ENCODE measurements at regions of chr18 and their contacts with region 1.

Region 1: GRCh38 chr18:58195278-58195765 is 151.3 kb downstream of the NEDD4L start:
- DNase-seq: no peak
- ATAC-seq: no peak
- H3K4me3 ChIP-seq: no peak overlapping the region
- H3K27ac ChIP-seq: no peak overlapping the region
- H3K4me1 ChIP-seq: peaks cover 5% of the 10 kb centered on the region in 2 experiments; a peak in 4 of 5 replicates
- H3K27me3 ChIP-seq: no peaks in the 10 kb centered on the region
- CTCF ChIP-seq: no peak
- EP300 ChIP-seq: no peak
- POLR2A ChIP-seq: no peak
- RAD21 ChIP-seq: no peak

Region 2: GRCh38 chr18:58231930-58232329 is 36.6 kb after region 1 on chr18:
- CTCF ChIA-PET with region 1: no interaction called
- POLR2A ChIA-PET with region 1: no interaction called
- in situ Hi-C with region 1: no loop called
- intact Hi-C with region 1: loop called (anchors 2 kb)
- DNase-seq: peak; percentile 24 to 53 (median 40)
- ATAC-seq: peak; percentile 94
- H3K4me3 ChIP-seq: no peak overlapping the region
- H3K27ac ChIP-seq: no peak overlapping the region
- H3K4me1 ChIP-seq: no peaks in the 10 kb centered on the region
- H3K27me3 ChIP-seq: no peaks in the 10 kb centered on the region
- CTCF ChIP-seq: peak; percentile 44 to 66 (median 52)
- EP300 ChIP-seq: no peak
- POLR2A ChIP-seq: no peak
- RAD21 ChIP-seq: peak; percentile 16 to 65

Region 3: GRCh38 chr18:58321986-58322385 is 126.7 kb after region 1 on chr18:
- CTCF ChIA-PET with region 1: interaction called, 10 read pairs
- POLR2A ChIA-PET with region 1: no interaction called
- in situ Hi-C with region 1: loop called (anchors 10 kb)
- intact Hi-C with region 1: loop called (anchors 1 kb)
- DNase-seq: peak; percentile 51 to 83 (median 64)
- ATAC-seq: peak; percentile 100
- H3K4me3 ChIP-seq: no peak overlapping the region
- H3K27ac ChIP-seq: peak overlapping the region; percentile 45; the same call in 1 of the 3 replicates
- H3K4me1 ChIP-seq: no peaks in the 10 kb centered on the region; a peak in 3 of 5 replicates
- H3K27me3 ChIP-seq: no peaks in the 10 kb centered on the region
- CTCF ChIP-seq: peak; percentile 60 to 76 (median 63)
- EP300 ChIP-seq: peak; percentile 17; the same call in 1 of the 2 replicates
- POLR2A ChIP-seq: no peak
- RAD21 ChIP-seq: peak; percentile 74 to 75

Region 4: GRCh38 chr18:58438161-58438957 is 243.0 kb after region 1 on chr18:
- CTCF ChIA-PET with region 1: no interaction called
- POLR2A ChIA-PET with region 1: no interaction called
- in situ Hi-C with region 1: no loop called
- intact Hi-C with region 1: no loop called
- DNase-seq: no peak
- ATAC-seq: no peak
- H3K4me3 ChIP-seq: no peak overlapping the region
- H3K27ac ChIP-seq: no peak overlapping the region
- H3K4me1 ChIP-seq: no peaks in the 10 kb centered on the region
- H3K27me3 ChIP-seq: peaks cover 0 to 5% of the 10 kb centered on the region in 2 experiments; a peak in 3 of 5 replicates
- CTCF ChIP-seq: no peak
- EP300 ChIP-seq: no peak
- POLR2A ChIP-seq: no peak
- RAD21 ChIP-seq: no peak

Measured in K562 (cell line).